ENCODE measurements at regions of chr3 and their contacts with region 1.

Region 1: DNA sequence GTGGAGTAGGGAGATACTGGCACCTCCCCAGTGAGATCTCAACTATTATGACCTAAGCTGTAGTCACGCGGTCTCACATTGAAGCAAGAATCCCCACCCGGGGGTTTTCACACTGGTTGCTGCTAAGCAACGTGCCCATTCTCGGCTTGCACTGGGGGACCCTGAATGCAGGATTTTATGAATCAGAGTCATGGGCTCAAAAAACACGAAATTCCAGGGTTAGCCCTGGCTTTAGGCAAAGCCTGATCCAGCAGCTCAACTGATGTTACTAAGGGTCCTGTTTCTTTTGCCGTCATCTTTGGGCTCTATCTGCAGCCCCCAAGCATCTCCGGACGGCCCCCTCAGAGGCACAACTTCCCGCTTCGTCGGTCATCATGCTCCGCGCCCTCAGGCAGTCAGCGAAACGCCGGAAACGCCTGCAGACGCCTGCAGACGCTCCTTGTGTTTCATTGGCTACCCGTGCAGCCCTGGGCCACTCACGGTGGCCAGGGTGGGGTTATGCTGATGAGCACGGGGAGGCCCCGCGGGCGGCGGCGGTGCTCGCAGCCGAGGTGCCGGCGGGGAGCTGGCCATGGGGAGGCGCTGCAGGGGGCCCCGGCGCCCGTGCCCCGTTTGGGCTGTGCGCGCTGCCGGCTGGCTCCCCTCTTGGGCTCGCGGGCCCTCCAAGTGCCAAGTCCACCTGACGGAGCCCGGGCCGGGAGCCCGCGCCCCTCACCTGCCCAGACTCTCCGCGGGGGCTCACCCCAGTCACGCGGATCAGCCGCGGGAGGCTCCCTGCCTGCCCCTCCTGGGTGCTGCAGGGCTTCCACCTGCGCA is 25.8 kb downstream of the EFCC1 start:
- DNase-seq: peak; percentile 96
- ATAC-seq: peak; percentile 100
- H3K4me3 Mint-ChIP-seq: peak overlapping the region; percentile 81
- H3K27ac Mint-ChIP-seq: peak overlapping the region; percentile 95
- H3K4me1 Mint-ChIP-seq: peaks cover 30% of the 10 kb centered on the region
- H3K27me3 Mint-ChIP-seq: peaks cover 2% of the 10 kb centered on the region

Region 2: DNA sequence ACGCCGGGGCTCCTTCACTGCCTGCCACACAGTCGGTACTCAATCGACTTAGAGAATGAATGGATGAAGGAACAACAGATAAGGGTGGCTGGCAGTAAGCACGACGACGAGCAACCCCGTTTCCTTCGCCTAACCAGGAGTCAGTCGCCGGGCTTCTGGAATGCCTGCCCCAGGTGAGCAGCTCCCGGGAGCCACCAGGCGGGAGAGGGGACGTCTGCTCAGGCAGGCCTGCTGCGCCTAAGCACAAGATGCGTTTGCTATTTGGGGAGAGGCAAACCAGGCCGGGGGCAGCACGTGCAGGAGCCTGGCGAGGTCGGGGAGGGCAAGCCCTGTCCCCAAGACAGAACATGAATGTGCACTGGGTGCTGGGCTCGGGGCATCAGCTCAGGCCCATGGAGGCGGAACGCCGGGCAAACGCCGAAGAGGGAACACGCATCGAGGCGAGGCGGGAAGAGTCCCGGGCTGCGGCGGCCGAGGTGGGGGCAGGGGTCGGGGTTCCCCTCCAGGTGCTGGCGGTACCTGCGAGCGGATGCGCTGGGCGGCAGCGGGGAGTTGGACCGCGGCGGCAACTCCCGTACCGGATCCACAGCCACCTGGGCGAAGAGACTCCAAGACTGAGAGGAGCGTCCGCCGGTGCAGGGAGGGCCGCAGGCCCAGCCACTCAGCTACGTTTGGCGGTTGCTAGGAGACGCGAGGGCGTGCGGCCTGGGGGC is 33.3 kb before region 1 on chr3 and contains the start of gene CFAP92:
- CTCF ChIA-PET with region 1: interaction called, 15 read pairs
- POLR2A ChIA-PET with region 1: no interaction called
- DNase-seq: peak; percentile 95
- ATAC-seq: peak; percentile 98
- H3K4me3 Mint-ChIP-seq: peak within 1 kb of the TSS; percentile 65
- H3K27ac Mint-ChIP-seq: peak within 1 kb of the TSS; percentile 24
- H3K4me1 Mint-ChIP-seq: peaks cover 29% of the 10 kb centered on the region
- H3K27me3 Mint-ChIP-seq: peaks cover 10% of the 10 kb centered on the region
- total RNA-seq, gene CFAP92: 0.18 to 0.26 TPM

Region 3: DNA sequence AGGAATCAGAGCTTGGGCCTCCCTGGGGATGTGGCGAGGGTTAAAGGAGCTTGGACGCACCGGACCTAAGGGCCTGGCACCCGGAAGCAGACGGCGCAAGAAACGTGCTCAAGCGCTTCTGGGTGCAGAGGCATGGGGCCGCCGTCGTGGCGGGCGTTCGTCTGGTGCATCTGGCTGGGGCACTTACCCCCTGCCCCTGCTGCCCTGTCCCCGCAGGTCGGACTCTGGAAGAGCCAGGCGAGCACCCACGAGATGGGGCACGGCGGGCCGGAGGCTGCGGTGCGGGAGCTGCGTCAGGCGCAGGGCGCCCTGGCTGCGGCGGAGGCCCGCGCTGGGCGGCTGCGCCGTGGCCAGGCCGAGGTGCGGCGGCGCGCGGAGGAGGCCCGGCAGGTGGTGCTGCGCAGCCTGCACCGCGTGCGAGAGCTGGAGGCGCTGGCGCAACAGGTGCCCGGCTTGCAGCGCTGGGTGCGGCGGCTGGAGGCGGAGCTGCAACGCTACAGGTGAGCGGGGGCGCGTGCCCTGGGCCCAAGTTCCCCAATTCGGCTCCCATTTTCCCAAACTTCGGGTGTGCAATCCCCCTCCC is 23.3 kb before region 1 on chr3:
- CTCF ChIA-PET with region 1: interaction called, 17 read pairs
- POLR2A ChIA-PET with region 1: no interaction called
- DNase-seq: peak; percentile 58
- ATAC-seq: peak; percentile 79
- H3K4me3 Mint-ChIP-seq: peak overlapping the region; percentile 10
- H3K27ac Mint-ChIP-seq: no peak overlapping the region
- H3K4me1 Mint-ChIP-seq: peaks cover 50% of the 10 kb centered on the region
- H3K27me3 Mint-ChIP-seq: peaks cover 39% of the 10 kb centered on the region

Region 4: GRCh38 chr3:129068291-129068886 is 41.5 kb after region 1 on chr3:
- CTCF ChIA-PET with region 1: interaction called, 17 read pairs
- POLR2A ChIA-PET with region 1: interaction called, 4 read pairs
- DNase-seq: peak; percentile 30
- ATAC-seq: peak; percentile 77
- H3K4me3 Mint-ChIP-seq: peak overlapping the region; percentile 58
- H3K27ac Mint-ChIP-seq: peak overlapping the region; percentile 39
- H3K4me1 Mint-ChIP-seq: peaks cover 25% of the 10 kb centered on the region
- H3K27me3 Mint-ChIP-seq: peaks cover 2% of the 10 kb centered on the region

Measured in activated CD8-positive, alpha-beta T cell treated with anti-CD3 and anti-CD28 coated beads, Interleukin-2, amount 10 ng/mL, durations not matched to agents 7 days and 5 days (primary cell).